Right lobe of liver (tissue), 6 donors: ENCODE measurements at regions of chr3 and their contacts with region 1.

Region 1: GRCh38 chr3:138118612-138119422 is 3.4 kb upstream of the DZIP1L start:
- DNase-seq: peak; percentile 68 to 69 (median 68)
- ATAC-seq: peak; percentile 81 to 88 (median 86)
- H3K4me3 ChIP-seq: no peak overlapping the region
- H3K27ac ChIP-seq: no peak overlapping the region
- H3K4me1 ChIP-seq: peaks cover 0 to 4% (median 0%) of the 10 kb centered on the region in 4 donors
- H3K27me3 ChIP-seq: no peaks in the 10 kb centered on the region
- CTCF ChIP-seq: peak; percentile 68 to 81 (median 76)
- POLR2A ChIP-seq: no peak

Region 2: DNA sequence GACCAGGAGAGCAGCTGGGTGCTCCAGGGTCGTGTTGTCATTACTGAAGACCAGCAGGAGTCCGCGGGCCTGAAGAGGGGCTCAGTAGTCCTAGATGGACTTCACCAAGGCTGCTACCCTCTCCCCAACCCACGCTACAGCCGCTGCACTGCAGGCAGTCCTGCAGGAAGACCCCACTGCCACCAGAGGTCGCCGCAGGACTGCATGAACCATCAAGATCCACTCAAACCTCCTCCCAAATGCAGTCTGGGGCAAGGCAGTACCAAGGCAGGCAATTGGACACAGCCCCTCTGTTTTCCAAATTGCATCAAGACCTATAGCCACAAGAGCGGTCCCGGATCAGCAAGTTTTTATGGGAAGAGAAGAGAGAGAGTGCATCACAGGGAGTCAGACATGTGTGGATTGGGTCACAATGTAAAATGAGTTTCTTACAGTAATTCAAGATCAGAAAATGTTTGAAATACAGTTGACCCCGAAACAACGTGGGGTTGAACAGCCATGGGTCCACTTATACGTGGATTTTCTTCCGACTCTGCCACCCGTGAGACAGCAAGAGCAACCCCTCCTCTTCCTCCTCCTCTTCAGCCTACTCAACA is 50.1 kb before region 1 on chr3:
- intact Hi-C with region 1: loop called (anchors 5 kb)
- DNase-seq: peak; percentile 77 to 84 (median 81)
- ATAC-seq: peak; percentile 95 to 99 (median 96)
- H3K4me3 ChIP-seq: no peak overlapping the region
- H3K27ac ChIP-seq: no peak overlapping the region
- H3K4me1 ChIP-seq: no peaks in the 10 kb centered on the region
- H3K27me3 ChIP-seq: no peaks in the 10 kb centered on the region
- CTCF ChIP-seq: peak; percentile 94 to 96 (median 96)
- POLR2A ChIP-seq: no peak

Region 3: GRCh38 chr3:138338811-138339210 is 220.0 kb after region 1 on chr3:
- intact Hi-C with region 1: no loop called
- DNase-seq: no peak
- ATAC-seq: no peak
- H3K4me3 ChIP-seq: no peak overlapping the region
- H3K27ac ChIP-seq: no peak overlapping the region
- H3K4me1 ChIP-seq: no peaks in the 10 kb centered on the region
- H3K27me3 ChIP-seq: no peaks in the 10 kb centered on the region
- CTCF ChIP-seq: no peak
- POLR2A ChIP-seq: no peak